Activated CD4-positive, alpha-beta T cell treated with anti-CD3 and anti-CD28 coated beads, Interleukin-2, amount 10 ng/mL, durations not matched to agents 7 days and 5 days (primary cell): ENCODE measurements at regions of chr18 and their contacts with region 1.

Region 1: DNA sequence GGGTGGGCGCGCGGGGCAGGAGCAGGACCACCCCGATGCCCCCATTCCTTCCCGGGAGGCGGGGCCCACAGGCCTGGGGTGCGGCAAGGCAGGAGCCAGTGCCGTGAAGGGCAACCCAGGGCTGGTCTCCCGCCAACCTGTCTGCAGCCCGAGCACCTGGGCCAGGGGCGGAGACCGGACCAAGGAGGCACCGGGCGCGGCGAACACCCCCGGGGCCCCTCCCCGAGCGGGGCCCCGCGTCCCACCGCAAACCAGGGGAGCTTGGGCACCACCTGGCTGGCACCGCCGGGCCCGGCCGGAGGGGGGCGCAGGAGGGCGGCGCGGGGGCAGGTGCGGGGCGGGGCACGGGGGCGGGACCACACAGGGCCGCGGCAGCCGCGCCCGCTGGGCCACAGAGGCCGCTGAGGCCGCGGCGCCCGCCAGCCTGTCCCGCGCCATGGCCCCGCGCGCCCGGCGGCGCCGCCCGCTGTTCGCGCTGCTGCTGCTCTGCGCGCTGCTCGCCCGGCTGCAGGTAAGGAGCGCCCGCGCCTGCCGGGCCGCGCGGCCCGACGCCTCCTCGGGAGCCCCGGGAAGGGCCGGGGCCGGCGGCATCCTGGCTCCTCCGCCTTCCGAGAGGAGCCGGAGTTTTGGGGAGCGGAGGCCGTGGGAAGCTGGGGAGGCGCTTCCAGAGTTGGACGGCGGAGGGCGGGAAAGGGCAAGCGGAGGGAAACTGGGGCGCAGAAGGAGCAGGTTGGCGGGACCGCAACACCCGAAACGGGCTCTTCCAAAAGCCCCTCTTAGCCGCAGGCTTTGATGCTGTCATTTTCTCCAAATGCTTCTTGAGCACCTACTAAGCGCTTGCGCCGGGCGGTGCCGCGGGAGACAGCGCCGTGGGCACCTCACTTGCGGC is at the start of gene TNFRSF11A:
- DNase-seq: peak; percentile 67
- H3K4me3 Mint-ChIP-seq: peak within 1 kb of the TSS; percentile 81
- H3K27ac Mint-ChIP-seq: peak within 1 kb of the TSS; percentile 73
- H3K4me1 Mint-ChIP-seq: peaks cover 51% of the 10 kb centered on the region
- H3K27me3 Mint-ChIP-seq: peaks cover 49% of the 10 kb centered on the region
- total RNA-seq, gene TNFRSF11A: 8.6 to 9.1 TPM

Region 2: GRCh38 chr18:62118328-62118727 is 206.8 kb before region 1 on chr18:
- CTCF ChIA-PET with region 1: no interaction called
- POLR2A ChIA-PET with region 1: no interaction called
- DNase-seq: no peak
- H3K4me3 Mint-ChIP-seq: no peak overlapping the region
- H3K27ac Mint-ChIP-seq: no peak overlapping the region
- H3K4me1 Mint-ChIP-seq: no peaks in the 10 kb centered on the region
- H3K27me3 Mint-ChIP-seq: no peaks in the 10 kb centered on the region

Region 3: GRCh38 chr18:62249478-62250097 is 75.6 kb before region 1 on chr18:
- CTCF ChIA-PET with region 1: no interaction called
- POLR2A ChIA-PET with region 1: no interaction called
- DNase-seq: peak; percentile 82
- H3K4me3 Mint-ChIP-seq: no peak overlapping the region
- H3K27ac Mint-ChIP-seq: no peak overlapping the region
- H3K4me1 Mint-ChIP-seq: no peaks in the 10 kb centered on the region
- H3K27me3 Mint-ChIP-seq: no peaks in the 10 kb centered on the region

Region 4: DNA sequence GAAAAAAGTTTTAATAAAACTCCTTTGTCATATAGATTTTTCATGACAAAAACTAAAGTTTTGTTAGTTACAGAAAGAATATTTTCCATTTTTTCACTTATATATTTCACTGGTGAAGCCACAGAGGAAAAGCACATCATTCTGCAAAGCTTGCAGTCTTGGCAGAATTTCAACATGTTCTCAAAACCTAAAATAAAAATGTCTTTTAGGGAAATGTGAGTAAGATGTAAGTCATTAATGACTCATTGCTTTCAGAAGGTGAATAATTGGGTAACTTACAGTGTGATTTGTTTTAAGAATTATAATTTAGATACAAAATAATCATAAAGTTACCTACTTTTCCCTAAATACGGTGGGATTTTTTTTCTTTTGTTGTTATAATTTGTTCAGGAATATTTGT is 43.5 kb before region 1 on chr18:
- CTCF ChIA-PET with region 1: no interaction called
- POLR2A ChIA-PET with region 1: no interaction called
- DNase-seq: no peak
- H3K4me3 Mint-ChIP-seq: no peak overlapping the region
- H3K27ac Mint-ChIP-seq: no peak overlapping the region
- H3K4me1 Mint-ChIP-seq: peaks cover 15% of the 10 kb centered on the region
- H3K27me3 Mint-ChIP-seq: no peaks in the 10 kb centered on the region

Region 5: DNA sequence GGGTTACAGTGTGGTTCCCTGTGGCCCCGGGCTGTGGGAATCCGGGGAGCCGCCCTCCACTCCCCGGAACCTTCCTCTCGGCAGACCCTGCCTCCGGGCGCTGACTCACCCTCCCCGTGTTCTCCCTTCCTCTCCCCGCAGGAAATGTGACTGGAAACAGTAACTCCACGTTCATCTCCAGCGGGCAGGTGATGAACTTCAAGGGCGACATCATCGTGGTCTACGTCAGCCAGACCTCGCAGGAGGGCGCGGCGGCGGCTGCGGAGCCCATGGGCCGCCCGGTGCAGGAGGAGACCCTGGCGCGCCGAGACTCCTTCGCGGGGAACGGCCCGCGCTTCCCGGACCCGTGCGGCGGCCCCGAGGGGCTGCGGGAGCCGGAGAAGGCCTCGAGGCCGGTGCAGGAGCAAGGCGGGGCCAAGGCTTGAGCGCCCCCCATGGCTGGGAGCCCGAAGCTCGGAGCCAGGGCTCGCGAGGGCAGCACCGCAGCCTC is 59.5 kb after region 1 on chr18:
- CTCF ChIA-PET with region 1: no interaction called
- POLR2A ChIA-PET with region 1: no interaction called
- DNase-seq: no peak
- H3K4me3 Mint-ChIP-seq: no peak overlapping the region
- H3K27ac Mint-ChIP-seq: no peak overlapping the region
- H3K4me1 Mint-ChIP-seq: no peaks in the 10 kb centered on the region
- H3K27me3 Mint-ChIP-seq: no peaks in the 10 kb centered on the region

Region 6: GRCh38 chr18:62425465-62426195 is 100.5 kb after region 1 on chr18:
- CTCF ChIA-PET with region 1: interaction called, 11 read pairs
- POLR2A ChIA-PET with region 1: no interaction called
- DNase-seq: peak; percentile 81
- H3K4me3 Mint-ChIP-seq: no peak overlapping the region
- H3K27ac Mint-ChIP-seq: no peak overlapping the region
- H3K4me1 Mint-ChIP-seq: peaks cover 45% of the 10 kb centered on the region
- H3K27me3 Mint-ChIP-seq: peaks cover 2% of the 10 kb centered on the region